AG04449 (cell line): ENCODE measurements at regions of chr6 and their contacts with region 1.

Region 1: DNA sequence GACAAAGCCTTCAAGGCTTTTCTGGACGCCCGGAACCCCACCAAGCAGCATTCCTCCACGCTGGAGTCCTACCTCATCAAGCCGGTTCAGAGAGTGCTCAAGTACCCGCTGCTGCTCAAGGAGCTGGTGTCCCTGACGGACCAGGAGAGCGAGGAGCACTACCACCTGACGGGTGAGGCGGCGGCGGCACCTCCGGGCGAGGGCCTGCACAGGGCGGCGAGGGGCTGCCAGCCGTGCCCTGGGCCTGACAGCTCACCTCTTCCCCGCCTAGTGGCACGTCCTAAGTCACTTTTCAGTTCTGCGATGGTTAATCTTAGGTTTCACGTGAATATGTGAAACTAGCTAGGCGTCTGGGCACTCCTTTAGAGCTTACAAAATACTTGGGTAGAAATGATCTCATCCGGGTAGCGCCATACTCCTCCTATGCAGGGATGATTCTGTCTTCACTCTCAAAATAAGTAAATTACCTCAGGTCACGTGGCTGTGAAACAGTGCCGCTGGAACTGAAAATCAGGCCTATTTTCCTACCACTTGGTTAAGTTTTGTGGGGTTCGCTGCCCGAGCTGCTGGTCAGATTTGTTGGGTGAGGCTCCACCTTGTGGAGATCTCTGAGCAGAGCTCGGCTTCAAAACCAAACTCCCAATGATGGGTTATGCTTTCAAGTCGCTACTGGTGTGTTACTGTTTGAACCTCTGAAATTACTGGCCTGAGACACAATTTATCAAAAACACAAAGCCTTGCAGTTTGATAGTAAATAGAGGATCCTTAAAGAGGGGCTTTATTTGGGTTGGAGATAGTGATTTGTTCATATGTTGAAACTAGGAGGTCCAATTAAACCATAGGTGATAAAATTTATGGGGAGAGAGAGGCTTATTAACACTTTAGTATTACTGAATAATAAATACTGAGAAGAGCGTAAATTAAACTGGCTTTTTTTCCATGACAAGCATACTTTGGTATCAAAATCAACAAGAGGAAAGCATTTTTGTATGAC is 15.5 kb upstream of the CLDN20 start:
- DNase-seq: peak; percentile 56
- H3K4me3 ChIP-seq: no peak overlapping the region
- CTCF ChIP-seq: peak; percentile 80

Region 2: DNA sequence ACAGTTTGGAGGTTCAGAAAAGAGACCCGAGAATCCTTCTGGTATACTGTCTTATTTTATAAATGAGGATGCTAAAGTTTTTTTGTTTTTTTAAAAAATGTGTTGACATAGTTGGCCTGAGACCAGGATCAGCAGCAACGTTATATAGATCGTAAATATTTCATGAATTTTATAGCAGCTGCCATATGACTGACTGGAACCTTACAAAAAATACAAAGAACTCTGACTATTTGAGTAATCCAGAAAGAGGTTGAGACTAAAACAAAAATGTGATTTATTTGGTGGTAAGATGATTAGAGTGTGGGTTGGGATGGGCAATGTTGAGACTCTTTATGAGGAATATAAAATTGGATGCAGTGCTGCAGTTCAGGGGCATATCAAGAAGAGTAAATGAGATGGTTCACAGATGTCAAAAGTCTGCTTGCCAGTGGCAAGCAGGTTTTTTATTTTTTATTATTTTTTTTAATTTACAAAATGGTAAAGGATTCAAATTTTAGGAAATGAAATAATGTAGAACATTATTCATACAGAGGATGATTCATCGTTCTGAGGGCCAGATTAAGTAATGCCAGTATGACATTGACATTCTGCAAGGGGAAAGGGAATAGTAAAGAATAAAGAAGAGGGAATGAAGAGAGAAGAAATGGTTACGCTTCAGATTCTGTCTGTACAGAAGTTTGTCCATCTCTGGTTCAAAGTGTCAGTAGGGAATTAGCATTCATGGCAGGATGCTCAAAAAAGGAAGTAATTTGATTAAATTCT is 456.6 kb before region 1 on chr6:
- CTCF ChIA-PET with region 1: no interaction called
- POLR2A ChIA-PET with region 1: no interaction called
- DNase-seq: no peak
- H3K4me3 ChIP-seq: no peak overlapping the region
- CTCF ChIP-seq: no peak

Region 3: DNA sequence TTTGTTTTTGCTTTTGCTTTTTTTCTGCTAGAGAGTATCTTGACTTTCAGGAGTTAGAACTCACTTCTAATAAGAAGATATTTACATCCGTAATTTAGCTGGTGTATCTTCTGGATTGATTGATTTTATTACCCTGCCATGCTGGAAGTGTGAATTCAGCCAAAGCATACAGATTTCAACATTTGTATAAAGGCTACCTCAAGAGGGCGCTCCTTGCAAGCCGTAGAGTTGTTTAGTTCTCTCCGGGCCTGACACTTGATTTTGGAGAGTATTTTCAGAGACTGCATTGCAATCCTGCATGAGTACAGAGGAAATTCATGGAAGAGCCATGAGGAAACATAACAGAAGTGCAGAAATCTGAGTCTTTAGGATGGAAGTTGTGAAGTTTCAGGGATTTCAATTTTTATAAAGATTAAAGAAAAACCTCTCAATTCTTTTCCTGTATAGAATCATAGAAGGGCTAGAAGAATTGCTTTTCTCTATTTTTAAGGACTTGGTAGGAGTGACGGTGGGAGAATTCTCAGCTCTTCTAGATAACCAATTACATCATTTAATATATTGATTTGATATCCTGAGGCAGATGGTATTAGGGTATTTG is 319.9 kb before region 1 on chr6:
- CTCF ChIA-PET with region 1: interaction called, 135 read pairs
- POLR2A ChIA-PET with region 1: no interaction called
- DNase-seq: no peak
- H3K4me3 ChIP-seq: no peak overlapping the region
- CTCF ChIP-seq: peak; percentile 53

Region 4: DNA sequence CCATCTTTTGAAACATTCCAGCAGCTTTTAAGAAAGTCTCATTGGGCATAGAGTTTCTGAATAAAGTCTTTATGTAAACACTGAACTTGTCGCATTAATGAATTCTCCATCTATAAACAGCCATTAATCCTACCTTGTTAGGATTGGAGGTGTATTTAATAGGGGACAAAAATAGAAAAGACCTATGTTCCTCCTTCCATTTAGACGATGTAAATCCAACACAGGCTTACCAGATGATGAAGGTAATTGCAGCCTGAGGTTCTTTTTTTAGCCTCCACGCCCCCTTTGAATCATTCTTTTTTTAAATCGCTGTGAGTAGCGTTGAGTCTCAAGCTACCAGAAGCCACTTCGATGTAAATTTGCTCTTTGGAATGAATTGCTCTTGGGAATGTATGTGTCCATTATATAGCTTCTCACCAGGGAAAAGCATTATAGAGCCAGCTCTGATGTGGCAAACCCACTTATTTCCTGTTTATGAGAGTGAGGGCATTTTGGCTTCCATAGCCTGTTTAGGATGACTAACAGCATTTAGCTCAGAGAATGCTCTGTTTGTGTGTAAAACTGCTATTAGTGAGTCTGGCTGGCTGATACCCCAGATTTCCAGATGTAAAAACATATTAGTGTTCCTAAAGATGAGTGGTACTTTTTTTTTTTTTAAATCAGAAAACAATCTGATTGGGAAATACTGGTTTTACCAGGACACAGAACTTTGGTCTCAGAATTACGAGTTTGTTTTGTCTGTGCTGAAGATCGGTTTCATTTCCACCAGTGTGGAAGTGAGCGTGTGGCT is 59.4 kb before region 1 on chr6:
- CTCF ChIA-PET with region 1: interaction called, 28 read pairs
- POLR2A ChIA-PET with region 1: interaction called, 9 read pairs
- DNase-seq: peak; percentile 98
- H3K4me3 ChIP-seq: no peak overlapping the region; the same call in 1 of the 2 replicates
- CTCF ChIP-seq: no peak

Region 5: GRCh38 chr6:155235087-155235486 is 13.2 kb before region 1 on chr6:
- CTCF ChIA-PET with region 1: interaction called, 13 read pairs
- POLR2A ChIA-PET with region 1: interaction called, 3 read pairs
- DNase-seq: no peak
- H3K4me3 ChIP-seq: no peak overlapping the region
- CTCF ChIP-seq: no peak

Region 6: DNA sequence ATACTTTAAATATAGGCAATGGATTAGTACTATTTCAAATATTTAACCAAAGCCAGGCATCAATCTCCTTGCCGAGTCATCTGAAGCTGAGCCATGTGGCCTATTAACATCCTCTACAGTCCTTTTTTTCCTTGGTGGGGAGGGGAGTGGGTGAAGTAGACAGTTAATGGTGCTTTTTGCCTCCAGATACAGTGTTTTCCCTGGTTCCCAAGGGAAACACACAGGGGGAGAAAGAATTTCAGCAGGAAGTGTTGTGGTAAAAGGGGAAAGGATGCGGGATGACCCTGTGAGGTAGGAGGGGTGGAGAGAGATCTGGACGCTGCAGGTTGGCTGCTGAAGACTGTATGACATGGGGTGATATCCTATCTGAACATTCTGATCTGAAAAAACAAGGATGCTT is 25.1 kb after region 1 on chr6:
- CTCF ChIA-PET with region 1: interaction called, 18 read pairs
- POLR2A ChIA-PET with region 1: no interaction called
- DNase-seq: peak; percentile 79
- H3K4me3 ChIP-seq: no peak overlapping the region
- CTCF ChIP-seq: no peak

Region 7: DNA sequence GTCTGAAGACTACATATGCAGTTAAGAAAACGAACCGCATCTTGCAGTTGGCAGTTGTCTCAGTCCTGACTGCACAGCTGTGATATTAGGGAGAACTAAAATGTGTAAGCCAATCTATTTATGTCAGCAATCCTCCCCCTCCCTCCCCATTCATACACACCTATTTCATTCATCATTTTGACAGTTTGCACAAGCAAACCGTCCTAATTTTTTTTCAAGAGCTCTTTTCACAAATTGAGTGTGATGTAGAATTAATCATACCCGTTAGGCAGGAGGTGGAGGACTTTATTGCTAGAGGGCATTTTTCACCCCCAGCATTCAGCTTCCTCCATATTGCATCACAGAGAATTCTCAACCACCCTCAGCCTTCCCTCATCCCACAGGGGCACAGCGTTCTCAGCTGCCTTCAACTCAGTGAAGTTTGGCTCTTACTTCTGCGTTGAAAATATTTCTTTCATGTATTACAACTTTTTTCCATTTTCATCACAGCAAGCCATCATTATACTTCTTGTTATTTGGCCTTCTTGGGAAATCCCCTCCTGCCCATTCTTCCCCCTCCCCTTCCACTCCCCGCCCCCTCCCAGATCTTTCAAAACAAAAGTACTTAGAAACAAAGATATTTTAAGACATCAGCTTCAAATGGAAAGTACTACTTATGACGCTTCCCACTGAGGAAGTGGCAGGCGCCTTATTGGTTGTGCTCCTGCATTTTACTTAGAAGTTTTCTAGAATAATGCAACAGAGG is 169.9 kb after region 1 on chr6:
- CTCF ChIA-PET with region 1: no interaction called
- POLR2A ChIA-PET with region 1: no interaction called
- DNase-seq: peak; percentile 31
- H3K4me3 ChIP-seq: no peak overlapping the region
- CTCF ChIP-seq: no peak